Activated CD4-positive, alpha-beta memory T cell treated with anti-CD3 and anti-CD28 coated beads, Interleukin-2, amount 10 ng/mL, durations not matched to agents 7 days and 5 days (primary cell): ENCODE measurements at regions of chr1 and their contacts with region 1.

Region 1: DNA sequence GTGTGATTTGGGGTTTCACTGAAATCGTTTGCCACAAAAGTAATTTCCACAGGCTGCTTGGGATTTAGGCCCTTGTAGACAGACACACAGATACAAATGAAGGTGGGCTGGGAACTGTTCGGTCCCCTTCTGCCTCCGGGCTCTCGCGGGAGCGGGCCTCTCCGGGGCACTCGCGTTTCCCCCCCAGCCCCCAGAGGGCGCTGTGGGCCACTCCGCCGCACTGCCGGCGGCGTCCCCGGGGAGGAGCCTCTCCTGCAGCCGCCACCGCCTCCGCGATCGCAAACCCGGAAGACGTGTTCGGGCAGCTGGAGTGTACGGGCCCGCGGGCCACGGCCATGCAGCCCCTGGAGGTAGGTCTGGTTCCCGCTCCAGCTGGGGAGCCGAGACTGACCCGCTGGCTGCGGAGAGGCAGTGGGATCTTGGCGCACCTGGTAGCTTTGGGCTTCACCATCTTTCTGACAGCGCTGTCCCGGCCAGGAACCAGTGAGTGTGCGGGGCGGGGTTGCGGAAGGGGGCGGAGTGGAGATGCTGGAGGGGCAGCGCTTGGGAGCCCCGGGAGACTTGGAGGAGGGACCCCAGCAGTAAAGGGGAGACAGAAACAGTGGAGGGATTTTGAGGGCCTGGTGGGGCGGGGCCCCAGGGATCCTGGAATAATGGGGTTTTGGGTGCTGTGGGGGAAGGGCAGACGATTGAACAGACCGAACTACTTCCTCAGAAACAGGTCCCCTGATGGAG is at the start of gene CYB561D1:
- DNase-seq: peak; percentile 91
- H3K4me3 Mint-ChIP-seq: peak within 1 kb of the TSS; percentile 96
- H3K27ac Mint-ChIP-seq: peak within 1 kb of the TSS; percentile 82
- H3K4me1 Mint-ChIP-seq: peaks cover 42% of the 10 kb centered on the region
- H3K27me3 Mint-ChIP-seq: no peaks in the 10 kb centered on the region
- total RNA-seq, gene CYB561D1: 19.5 to 21.4 TPM

Region 2: GRCh38 chr1:109509176-109510134 is 15.5 kb after region 1 on chr1 and contains the start of gene AMIGO1:
- CTCF ChIA-PET with region 1: interaction called, 139 read pairs
- POLR2A ChIA-PET with region 1: interaction called, 17 read pairs
- DNase-seq: peak; percentile 51
- H3K4me3 Mint-ChIP-seq: peak within 1 kb of the TSS; percentile 77
- H3K27ac Mint-ChIP-seq: peak within 1 kb of the TSS; percentile 26
- H3K4me1 Mint-ChIP-seq: peaks cover 34% of the 10 kb centered on the region
- H3K27me3 Mint-ChIP-seq: peaks cover 31% of the 10 kb centered on the region
- total RNA-seq, gene AMIGO1: 1.2 to 1.3 TPM

Region 3: DNA sequence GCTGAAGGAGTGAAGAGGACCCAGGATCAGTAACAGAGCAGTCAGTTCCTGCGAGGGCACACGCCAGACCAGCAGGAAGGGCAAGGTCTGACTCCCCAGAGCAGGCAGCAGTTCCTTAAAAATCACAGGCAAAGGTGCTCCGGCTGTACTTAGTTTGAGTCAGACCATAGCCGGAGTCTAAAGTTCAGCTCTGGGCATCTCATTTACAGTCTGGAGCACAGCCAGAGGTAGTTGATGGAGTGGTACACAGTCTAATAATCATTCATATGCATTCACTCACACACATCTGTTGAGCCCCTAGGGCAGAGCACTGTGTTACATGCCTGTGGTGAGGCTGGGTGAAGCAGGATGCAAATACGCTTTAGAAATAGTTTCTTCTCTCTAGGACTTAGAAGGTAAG is 22.9 kb after region 1 on chr1:
- CTCF ChIA-PET with region 1: interaction called, 139 read pairs
- POLR2A ChIA-PET with region 1: interaction called, 4 read pairs
- DNase-seq: no peak
- H3K4me3 Mint-ChIP-seq: no peak overlapping the region
- H3K27ac Mint-ChIP-seq: no peak overlapping the region
- H3K4me1 Mint-ChIP-seq: no peaks in the 10 kb centered on the region
- H3K27me3 Mint-ChIP-seq: peaks cover 6% of the 10 kb centered on the region